Head of caudate nucleus (tissue), 42 donors: ENCODE measurements at regions of chr19 and their contacts with region 1.

Region 1: DNA sequence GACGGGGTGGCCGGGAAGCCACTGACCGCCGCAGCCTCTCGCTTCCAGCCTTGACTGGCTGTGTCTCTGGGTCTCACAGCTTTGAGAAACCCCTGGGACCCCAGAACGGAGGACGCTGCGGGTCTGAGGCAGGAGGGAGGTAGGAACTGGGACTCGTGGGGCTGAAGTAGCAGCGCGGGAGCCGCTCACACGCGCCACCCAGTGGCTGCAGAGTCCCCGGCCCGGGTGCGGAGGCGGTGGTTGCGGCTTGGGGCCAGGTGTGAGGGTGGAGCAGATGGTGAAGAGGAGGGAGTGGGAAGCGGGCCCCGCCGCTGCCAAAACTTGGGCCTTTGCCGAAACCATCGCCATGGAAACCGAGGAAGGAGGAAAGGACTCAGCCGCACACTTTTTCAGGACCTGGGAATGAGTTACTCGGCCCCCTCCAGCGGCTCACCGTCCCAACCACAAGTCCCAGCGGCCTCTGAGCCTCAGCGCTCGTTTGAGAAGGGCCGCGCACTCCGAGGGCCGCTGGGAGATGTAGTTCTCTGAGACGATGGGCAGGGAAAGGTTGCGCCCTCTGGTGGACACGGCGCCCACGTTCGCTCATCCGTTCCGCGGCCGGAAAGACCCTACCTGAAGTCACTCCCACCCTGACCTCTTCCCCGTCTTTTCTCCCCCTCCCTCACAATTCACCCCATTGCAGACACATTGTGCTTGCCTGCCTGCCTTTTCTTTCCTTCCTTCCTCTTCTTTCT is 2.2 kb upstream of the SLC17A7 start:
- DNase-seq: peak; percentile 90 to 98 (median 95)

Region 2: GRCh38 chr19:49224856-49225255 is 218.7 kb before region 1 on chr19:
- intact Hi-C with region 1: loop called (anchors 10 kb)
- DNase-seq: peak in 40 of 42 donors; percentile 11 to 79 (median 46)

Region 3: DNA sequence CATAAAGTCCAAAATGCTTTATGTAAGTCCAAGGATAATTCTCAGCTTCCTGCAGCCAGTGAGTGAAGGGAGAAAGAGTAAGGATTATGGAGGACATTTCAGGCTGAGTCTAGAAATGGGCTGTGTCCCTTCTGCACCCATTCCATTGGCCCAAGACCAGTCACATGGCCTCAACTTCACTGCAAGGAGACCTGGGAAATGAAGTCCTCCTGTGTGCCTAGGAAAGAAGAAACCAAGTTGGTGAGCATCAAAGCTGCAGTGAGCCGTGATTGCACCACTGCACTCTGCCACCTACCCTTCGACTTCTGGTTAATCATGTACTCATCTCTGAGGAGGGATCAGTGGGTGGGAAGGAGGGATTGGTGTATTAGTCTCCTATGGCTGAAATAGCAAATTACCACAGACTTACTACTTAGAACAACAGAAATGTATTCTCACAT is 111.9 kb before region 1 on chr19:
- intact Hi-C with region 1: no loop called
- DNase-seq: peak; percentile 36 to 91 (median 72)

Region 4: GRCh38 chr19:49391581-49392399 is 51.7 kb before region 1 on chr19:
- intact Hi-C with region 1: loop called (anchors 5 kb)
- DNase-seq: peak; percentile 50 to 88 (median 76)

Region 5: GRCh38 chr19:49475995-49476880 is 32.7 kb after region 1 on chr19:
- intact Hi-C with region 1: no loop called
- DNase-seq: peak in 21 of 42 donors; percentile 20 to 68 (median 42)

Region 6: GRCh38 chr19:49497047-49497788 is 53.7 kb after region 1 on chr19:
- intact Hi-C with region 1: no loop called
- DNase-seq: peak in 35 of 42 donors; percentile 29 to 75 (median 55)